Mammary epithelial cell (primary cell): ENCODE measurements at regions of chr1 and their contacts with region 1.

Region 1: GRCh38 chr1:187264995-187265602 is 436.4 kb downstream of the PLA2G4A start:
- DNase-seq: peak; percentile 46
- H3K4me3 ChIP-seq: no peak overlapping the region
- H3K27ac ChIP-seq: no peak overlapping the region
- H3K4me1 ChIP-seq: peaks cover 6% of the 10 kb centered on the region
- H3K27me3 ChIP-seq: peaks cover 4% of the 10 kb centered on the region
- CTCF ChIP-seq: peak; percentile 66

Region 2: DNA sequence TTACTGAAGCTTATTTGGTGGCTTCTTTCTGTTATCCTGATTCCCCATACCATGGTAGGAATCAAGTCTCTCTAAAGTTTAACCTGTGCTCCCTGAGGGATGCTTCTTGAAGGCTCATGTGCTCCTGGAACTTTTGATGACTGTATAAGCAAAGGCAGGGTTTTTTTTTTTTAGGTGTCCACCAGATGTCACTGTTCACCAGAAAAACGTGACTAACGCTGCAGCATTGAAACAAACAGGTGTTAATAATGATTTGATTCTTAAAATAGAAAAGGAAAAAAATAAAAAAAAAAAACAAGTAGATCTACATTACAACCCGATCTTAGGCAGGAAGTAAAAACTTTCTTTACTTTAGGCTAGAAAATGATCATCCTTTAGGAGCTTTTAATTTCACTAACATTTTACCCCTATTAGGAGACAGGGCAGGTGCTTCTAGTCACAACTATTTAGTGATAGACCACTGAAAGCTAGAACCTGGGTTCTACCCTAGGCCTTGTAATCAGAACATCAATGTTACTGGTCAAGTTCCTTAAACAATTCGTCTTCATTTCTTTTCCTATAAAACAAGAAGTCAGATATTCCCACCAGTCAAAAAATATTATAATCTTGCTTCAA is 213.4 kb before region 1 on chr1:
- CTCF ChIA-PET with region 1: no interaction called
- dilution Hi-C with region 1: no loop called
- in situ Hi-C with region 1: no loop called
- intact Hi-C with region 1: loop called (anchors 5 kb)
- DNase-seq: peak; percentile 31
- H3K4me3 ChIP-seq: no peak overlapping the region
- H3K27ac ChIP-seq: no peak overlapping the region
- H3K4me1 ChIP-seq: no peaks in the 10 kb centered on the region
- H3K27me3 ChIP-seq: peaks cover 3% of the 10 kb centered on the region
- CTCF ChIP-seq: peak; percentile 22 to 55

Region 3: DNA sequence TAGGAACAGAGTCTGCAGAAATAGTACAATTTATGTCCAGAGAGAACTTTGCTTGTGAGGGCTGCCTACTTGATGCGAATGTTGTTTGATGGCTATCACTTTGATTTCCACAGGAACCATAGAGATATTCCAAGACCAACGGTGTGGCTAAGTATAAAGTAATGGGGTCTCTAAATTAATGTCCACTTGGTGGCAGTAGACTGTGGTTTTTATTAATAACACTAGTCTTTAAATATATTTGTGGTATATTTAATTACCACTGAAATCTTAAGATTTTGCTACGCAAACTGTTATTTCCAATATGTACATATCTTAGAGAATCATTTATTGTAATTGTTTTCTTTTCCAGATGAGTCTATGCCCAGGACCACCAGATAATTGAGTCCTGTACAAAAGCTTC is 211.6 kb after region 1 on chr1:
- CTCF ChIA-PET with region 1: no interaction called
- dilution Hi-C with region 1: no loop called
- in situ Hi-C with region 1: no loop called
- intact Hi-C with region 1: loop called (anchors 5 kb)
- DNase-seq: no peak
- H3K4me3 ChIP-seq: no peak overlapping the region
- H3K27ac ChIP-seq: no peak overlapping the region
- H3K4me1 ChIP-seq: no peaks in the 10 kb centered on the region
- H3K27me3 ChIP-seq: no peaks in the 10 kb centered on the region
- CTCF ChIP-seq: peak; percentile 22 to 33

Region 4: DNA sequence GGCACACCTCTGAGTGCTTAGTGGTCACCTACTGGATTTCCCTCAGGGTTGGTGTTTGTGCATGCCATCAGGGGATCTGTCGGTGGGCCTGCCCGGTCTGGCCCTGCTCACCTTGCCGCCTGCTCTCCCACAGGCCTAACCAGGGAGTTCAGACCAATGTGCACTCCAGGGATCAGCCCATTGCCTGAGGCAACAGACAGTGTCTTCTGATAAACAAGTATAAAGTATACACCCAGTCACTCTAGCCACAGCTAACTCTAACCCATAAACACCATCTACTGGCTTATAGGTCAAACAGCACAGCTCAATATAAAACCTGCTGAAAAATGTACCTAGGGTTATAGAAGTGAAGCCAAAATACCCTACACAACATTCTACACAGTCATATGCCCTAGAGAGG is 863.7 kb after region 1 on chr1:
- CTCF ChIA-PET with region 1: no interaction called
- dilution Hi-C with region 1: no loop called
- in situ Hi-C with region 1: no loop called
- intact Hi-C with region 1: loop called (anchors 5 kb)
- DNase-seq: peak; percentile 35
- H3K4me3 ChIP-seq: no peak overlapping the region
- H3K27ac ChIP-seq: no peak overlapping the region
- H3K4me1 ChIP-seq: no peaks in the 10 kb centered on the region
- H3K27me3 ChIP-seq: no peaks in the 10 kb centered on the region
- CTCF ChIP-seq: peak in 1 of 2 donors; percentile 54